AG04450 (cell line): ENCODE measurements at regions of chr17 and their contacts with region 1.

Region 1: DNA sequence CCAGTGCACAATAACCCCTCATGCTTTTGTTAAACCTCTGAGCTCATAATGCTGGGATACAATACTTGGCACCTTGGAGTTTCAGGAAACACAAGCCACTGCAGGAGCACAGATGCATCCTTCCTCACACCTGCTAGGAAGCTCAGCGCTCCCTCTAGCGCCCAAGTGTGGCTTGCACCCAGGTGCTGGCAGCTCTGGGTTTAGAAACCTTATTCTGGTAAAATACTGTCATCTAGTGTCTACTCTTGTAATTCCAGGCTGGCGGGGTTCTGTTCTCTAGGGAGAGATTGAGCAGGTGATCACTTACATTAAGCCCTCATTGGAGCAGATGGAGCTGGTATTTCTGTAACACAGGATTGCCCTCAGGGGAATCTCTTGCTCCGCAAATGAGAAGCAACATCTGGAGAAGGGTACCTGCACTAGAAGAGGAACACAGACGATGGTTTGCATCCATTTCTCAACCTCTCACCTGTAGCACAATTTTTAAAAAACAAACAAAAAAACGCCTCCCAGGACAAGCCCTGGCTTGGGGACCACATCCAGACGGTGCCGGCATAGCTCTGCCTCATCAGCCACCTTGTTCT is 1.5 kb downstream of the CCL1 start:
- DNase-seq: peak; percentile 72
- H3K4me3 ChIP-seq: no peak overlapping the region
- H3K27ac ChIP-seq: no peak overlapping the region
- H3K27me3 ChIP-seq: peaks cover 9% of the 10 kb centered on the region
- CTCF ChIP-seq: peak; percentile 100

Region 2: DNA sequence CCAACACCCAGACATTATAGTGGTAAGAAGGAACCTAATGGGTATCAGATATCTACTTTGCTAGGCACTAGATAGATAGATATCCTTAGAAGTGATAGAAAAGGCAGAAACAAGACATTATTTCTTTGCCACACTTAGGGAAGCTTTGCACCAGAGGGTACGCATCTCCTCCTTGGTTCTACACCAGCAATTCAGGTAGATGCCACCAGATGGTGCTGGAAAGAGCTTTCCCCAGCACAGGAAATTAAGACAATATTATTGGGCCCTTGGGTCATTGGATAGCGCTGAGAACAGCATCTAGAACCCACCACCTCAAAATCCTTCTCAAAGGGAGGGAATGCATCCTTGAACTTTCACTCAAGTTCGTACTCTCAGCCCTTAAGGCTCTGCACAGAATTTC is 280.3 kb before region 1 on chr17:
- CTCF ChIA-PET with region 1: interaction called, 23 read pairs
- POLR2A ChIA-PET with region 1: no interaction called
- DNase-seq: no peak
- H3K4me3 ChIP-seq: no peak overlapping the region
- H3K27ac ChIP-seq: no peak overlapping the region
- H3K27me3 ChIP-seq: no peaks in the 10 kb centered on the region
- CTCF ChIP-seq: peak; percentile 42; the same call in 1 of the 2 replicates

Region 3: GRCh38 chr17:34199932-34200534 is 161.5 kb before region 1 on chr17:
- CTCF ChIA-PET with region 1: interaction called, 849 read pairs
- POLR2A ChIA-PET with region 1: interaction called, 4 read pairs
- DNase-seq: peak; percentile 80
- H3K4me3 ChIP-seq: no peak overlapping the region
- H3K27ac ChIP-seq: no peak overlapping the region
- H3K27me3 ChIP-seq: peaks cover 3% of the 10 kb centered on the region
- CTCF ChIP-seq: peak; percentile 100

Region 4: GRCh38 chr17:34235389-34236028 is 126.1 kb before region 1 on chr17:
- CTCF ChIA-PET with region 1: interaction called, 38 read pairs
- POLR2A ChIA-PET with region 1: no interaction called
- DNase-seq: no peak
- H3K4me3 ChIP-seq: no peak overlapping the region
- H3K27ac ChIP-seq: no peak overlapping the region
- H3K27me3 ChIP-seq: no peaks in the 10 kb centered on the region
- CTCF ChIP-seq: no peak

Region 5: GRCh38 chr17:34269969-34270368 is 91.6 kb before region 1 on chr17 and contains the start of gene CCL7:
- CTCF ChIA-PET with region 1: interaction called, 73 read pairs
- POLR2A ChIA-PET with region 1: no interaction called
- DNase-seq: no peak
- H3K4me3 ChIP-seq: no peak within 1 kb of the TSS
- H3K27ac ChIP-seq: no peak within 1 kb of the TSS
- H3K27me3 ChIP-seq: no peaks in the 10 kb centered on the region
- CTCF ChIP-seq: no peak
- polyA plus RNA-seq, gene CCL7: 0.50 and 0.62 TPM in 2 replicates

Region 6: GRCh38 chr17:34318474-34318873 is 43.1 kb before region 1 on chr17:
- CTCF ChIA-PET with region 1: interaction called, 35 read pairs
- POLR2A ChIA-PET with region 1: no interaction called
- DNase-seq: no peak
- H3K4me3 ChIP-seq: no peak overlapping the region
- H3K27ac ChIP-seq: no peak overlapping the region
- H3K27me3 ChIP-seq: no peaks in the 10 kb centered on the region
- CTCF ChIP-seq: 0 out of 2 replicates have a peak, but pooled peaks have one; percentile 3